ENCODE measurements at regions of chr19 and their contacts with region 1.

Region 1: GRCh38 chr19:45016388-45017319 is 15.4 kb downstream of the RELB start:
- DNase-seq: peak; percentile 94
- ATAC-seq: peak; percentile 91
- H3K4me3 ChIP-seq: peak overlapping the region; percentile 60
- H3K27ac ChIP-seq: peak overlapping the region; percentile 89
- H3K4me1 ChIP-seq: peaks cover 20% of the 10 kb centered on the region
- H3K27me3 ChIP-seq: no peaks in the 10 kb centered on the region
- CTCF ChIP-seq: peak; percentile 74 to 81 (median 79)
- EP300 ChIP-seq: peak; percentile 75 to 91; a peak in 3 of 4 replicates
- POLR2A ChIP-seq: no peak; the same call in 1 of the 2 replicates
- RAD21 ChIP-seq: peak; percentile 87

Region 2: DNA sequence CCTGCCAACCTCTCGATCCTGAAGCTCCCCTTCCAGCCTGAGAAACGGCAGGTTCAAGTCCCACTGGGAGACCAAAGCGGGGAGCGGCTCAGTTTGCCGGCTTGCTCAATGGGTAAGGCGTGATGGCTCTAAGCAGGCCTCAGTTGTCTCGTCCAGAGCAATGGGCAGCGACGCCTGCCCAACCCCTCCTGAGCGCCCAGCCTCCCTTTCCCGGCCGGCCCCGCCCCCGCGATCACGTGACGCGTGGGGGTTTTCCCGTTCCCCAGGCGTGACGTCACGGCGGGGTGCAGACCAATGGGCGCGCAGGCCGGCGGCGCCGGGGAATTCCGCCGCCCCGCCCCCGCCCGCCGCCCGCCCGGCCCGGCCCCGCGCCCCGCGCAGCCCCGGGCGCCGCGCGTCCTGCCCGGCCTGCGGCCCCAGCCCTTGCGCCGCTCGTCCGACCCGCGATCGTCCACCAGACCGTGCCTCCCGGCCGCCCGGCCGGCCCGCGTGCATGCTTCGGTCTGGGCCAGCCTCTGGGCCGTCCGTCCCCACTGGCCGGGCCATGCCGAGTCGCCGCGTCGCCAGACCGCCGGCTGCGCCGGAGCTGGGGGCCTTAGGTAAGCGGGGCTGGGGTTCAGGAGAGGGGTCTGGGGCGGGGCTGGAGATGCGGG is 15.4 kb before region 1 on chr19 and contains the start of gene RELB:
- CTCF ChIA-PET with region 1: interaction called, 7 read pairs
- POLR2A ChIA-PET with region 1: interaction called, 8 read pairs
- RAD21 ChIA-PET with region 1: interaction called, 11 read pairs
- SMC1A ChIA-PET with region 1: interaction called, 8 read pairs
- in situ Hi-C with region 1: no loop called
- intact Hi-C with region 1: no loop called
- DNase-seq: peak; percentile 57
- ATAC-seq: peak; percentile 74
- H3K4me3 ChIP-seq: peak within 1 kb of the TSS; percentile 91
- H3K27ac ChIP-seq: peak within 1 kb of the TSS; percentile 92
- H3K4me1 ChIP-seq: peaks cover 3% of the 10 kb centered on the region; the same call in 1 of the 2 replicates
- H3K27me3 ChIP-seq: no peaks in the 10 kb centered on the region
- CTCF ChIP-seq: no peak
- EP300 ChIP-seq: 0 out of 4 replicates have a peak, but pooled peaks have one; percentile 22 to 25
- POLR2A ChIP-seq: peak; percentile 89
- RAD21 ChIP-seq: no peak
- polyA plus RNA-seq, gene RELB: 0.66 to 3.2 TPM

Region 3: DNA sequence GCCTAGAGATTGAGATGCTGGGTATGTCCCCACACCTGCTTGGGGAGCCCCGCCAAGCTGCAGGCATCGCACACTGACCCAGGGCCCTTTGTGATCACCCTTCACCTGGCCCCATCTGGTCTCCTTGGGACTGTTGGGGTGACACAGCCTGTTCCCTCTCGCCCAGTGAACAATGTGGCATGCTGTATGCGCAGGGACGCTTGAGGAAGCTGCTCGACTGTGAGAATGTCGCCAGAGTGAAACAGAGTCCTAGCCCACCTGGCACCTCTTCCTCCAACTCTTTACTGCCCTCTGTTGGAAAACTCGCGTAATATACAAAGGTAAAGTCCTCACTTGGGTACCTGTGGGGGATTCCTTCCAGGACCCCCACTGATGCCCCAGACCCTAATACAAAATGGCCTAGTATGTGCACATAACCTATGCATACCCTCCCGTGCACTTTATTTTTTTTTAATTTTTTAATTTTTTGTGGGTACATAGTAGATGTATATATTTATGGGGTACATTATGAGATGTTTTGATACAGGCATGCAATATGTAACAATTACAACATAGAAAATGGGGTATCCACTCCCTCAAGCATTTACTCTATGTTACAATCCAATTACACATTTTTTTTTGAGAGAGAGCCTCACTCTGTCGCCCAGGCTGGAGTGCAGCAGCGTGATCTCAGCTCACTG is 170.9 kb after region 1 on chr19:
- CTCF ChIA-PET with region 1: interaction called, 3 read pairs
- POLR2A ChIA-PET with region 1: no interaction called
- RAD21 ChIA-PET with region 1: no interaction called
- SMC1A ChIA-PET with region 1: no interaction called
- in situ Hi-C with region 1: no loop called
- intact Hi-C with region 1: loop called (anchors 10 kb)
- DNase-seq: no peak
- ATAC-seq: peak; percentile 90
- H3K4me3 ChIP-seq: no peak overlapping the region
- H3K27ac ChIP-seq: no peak overlapping the region
- H3K4me1 ChIP-seq: peaks cover 3% of the 10 kb centered on the region; the same call in 1 of the 2 replicates
- H3K27me3 ChIP-seq: no peaks in the 10 kb centered on the region
- CTCF ChIP-seq: peak; percentile 67 to 73 (median 69)
- EP300 ChIP-seq: no peak
- POLR2A ChIP-seq: no peak
- RAD21 ChIP-seq: peak; percentile 78